ENCODE measurements at regions of chr6 and their contacts with region 1.

Region 1: GRCh38 chr6:52389626-52390360 is 27.8 kb downstream of the PAQR8 start:
- DNase-seq: peak; percentile 66 to 85 (median 69)
- H3K4me3 ChIP-seq: peak overlapping the region; percentile 14 to 34
- H3K4me3 Mint-ChIP-seq: peak overlapping the region; percentile 77 to 92 (median 82)
- H3K27ac ChIP-seq: peak overlapping the region; percentile 80
- H3K27ac Mint-ChIP-seq: peak overlapping the region; percentile 95 to 99 (median 97)
- H3K4me1 ChIP-seq: peaks cover 90% of the 10 kb centered on the region
- H3K4me1 Mint-ChIP-seq: peaks cover 67 to 94% (median 81%) of the 10 kb centered on the region in 4 donors
- H3K27me3 ChIP-seq: no peaks in the 10 kb centered on the region
- H3K27me3 Mint-ChIP-seq: no peaks in the 10 kb centered on the region

Region 2: DNA sequence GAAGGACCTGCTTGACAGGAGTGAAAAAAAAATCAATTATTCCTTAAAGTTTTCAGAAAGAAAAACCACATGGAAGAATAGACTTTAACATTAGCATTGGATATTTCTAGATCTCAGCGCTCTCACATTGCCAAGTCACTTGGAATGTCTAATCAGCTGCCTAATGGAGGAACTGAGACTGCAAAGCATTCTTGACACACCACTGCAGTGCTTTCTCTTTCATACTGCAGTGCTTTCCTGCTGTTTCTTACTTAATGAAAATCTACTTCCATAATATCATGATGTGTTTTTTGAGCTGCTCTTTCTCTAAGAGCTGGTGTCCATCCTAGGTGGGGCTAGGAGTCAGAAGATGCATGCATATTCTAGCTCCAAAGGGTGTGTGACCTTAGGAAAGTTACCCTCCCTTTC is 84.8 kb before region 1 on chr6:
- CTCF ChIA-PET with region 1: interaction called, 15 read pairs
- POLR2A ChIA-PET with region 1: interaction called, 48 read pairs
- intact Hi-C with region 1: no loop called
- DNase-seq: peak in 1 of 5 donors; percentile 22
- H3K4me3 ChIP-seq: peak overlapping the region in 1 of 2 donors; percentile 34
- H3K4me3 Mint-ChIP-seq: peak overlapping the region; percentile 73 to 92 (median 82)
- H3K27ac ChIP-seq: peak overlapping the region; percentile 59
- H3K27ac Mint-ChIP-seq: peak overlapping the region; percentile 88 to 96 (median 94)
- H3K4me1 ChIP-seq: peaks cover 73% of the 10 kb centered on the region
- H3K4me1 Mint-ChIP-seq: peaks cover 54 to 89% (median 71%) of the 10 kb centered on the region in 4 donors
- H3K27me3 ChIP-seq: no peaks in the 10 kb centered on the region
- H3K27me3 Mint-ChIP-seq: no peaks in the 10 kb centered on the region

Region 3: DNA sequence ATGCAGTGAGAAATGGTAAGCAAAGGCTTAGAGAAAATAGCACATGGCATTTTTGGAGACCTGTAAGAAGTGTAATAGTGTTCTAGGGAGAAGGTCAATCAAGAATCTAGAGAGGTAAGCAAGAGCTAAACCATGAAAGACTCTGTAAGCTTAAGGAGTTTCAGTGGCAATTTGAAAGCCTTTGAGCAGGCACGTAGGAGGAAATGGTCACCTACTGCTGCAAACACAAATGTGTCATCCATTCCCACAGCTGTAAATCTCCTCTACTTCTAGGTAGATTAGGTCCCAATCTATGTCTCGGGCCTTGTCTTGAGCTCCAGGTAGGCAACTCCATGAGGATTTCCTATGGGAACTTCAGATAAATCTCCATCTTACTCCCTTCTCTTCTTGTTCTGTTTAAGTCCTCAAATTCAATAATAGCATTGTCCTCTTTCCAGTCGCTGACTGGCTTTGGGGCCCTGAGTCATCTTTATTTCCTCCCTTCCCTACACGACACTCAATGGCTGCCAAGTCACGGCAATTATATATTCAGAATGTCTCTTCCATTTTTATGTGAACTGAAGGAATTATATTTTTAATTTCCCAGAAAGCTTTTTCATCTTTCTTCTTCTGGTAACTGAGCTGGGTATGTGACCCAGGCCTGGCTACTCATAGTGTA is 52.0 kb before region 1 on chr6:
- CTCF ChIA-PET with region 1: interaction called, 4 read pairs
- POLR2A ChIA-PET with region 1: interaction called, 20 read pairs
- intact Hi-C with region 1: no loop called
- DNase-seq: no peak
- H3K4me3 ChIP-seq: no peak overlapping the region
- H3K4me3 Mint-ChIP-seq: peak overlapping the region in 1 of 8 donors; percentile 48
- H3K27ac ChIP-seq: no peak overlapping the region
- H3K27ac Mint-ChIP-seq: peak overlapping the region in 5 of 7 donors; percentile 38 to 86 (median 66)
- H3K4me1 ChIP-seq: peaks cover 60% of the 10 kb centered on the region
- H3K4me1 Mint-ChIP-seq: peaks cover 43 to 67% (median 53%) of the 10 kb centered on the region in 4 donors
- H3K27me3 ChIP-seq: no peaks in the 10 kb centered on the region
- H3K27me3 Mint-ChIP-seq: no peaks in the 10 kb centered on the region

Region 4: DNA sequence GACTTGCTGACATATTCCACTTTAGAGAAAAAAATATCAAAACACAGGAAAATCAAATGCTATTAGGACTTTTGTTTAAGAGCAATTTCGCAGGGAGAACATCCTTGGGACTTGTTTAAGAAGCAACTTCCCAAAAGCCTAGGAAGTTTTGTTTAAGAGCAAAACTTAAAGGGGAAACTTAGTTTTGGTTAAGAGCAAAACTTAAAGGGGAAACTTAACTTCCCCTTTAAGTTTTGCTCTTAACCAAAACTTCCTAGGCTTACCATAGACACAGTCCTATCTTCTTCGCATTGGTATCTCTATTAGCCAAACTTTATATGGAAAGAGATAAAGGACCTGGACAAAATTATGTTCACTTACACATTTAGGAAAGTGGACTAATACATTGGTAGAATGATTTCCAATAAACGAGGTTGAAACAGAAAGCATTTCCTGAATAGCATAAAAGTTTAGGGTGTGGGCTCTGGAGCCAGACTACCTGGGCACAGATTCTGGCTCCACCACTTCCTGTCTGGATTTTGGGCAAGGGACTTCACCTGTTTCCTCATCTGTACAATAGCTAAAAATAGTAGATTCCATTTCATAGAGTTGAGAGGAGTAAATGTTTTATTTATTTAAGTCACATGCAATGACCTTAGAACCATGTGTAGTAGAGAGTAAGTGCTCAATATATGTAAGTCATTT is 12.1 kb before region 1 on chr6:
- CTCF ChIA-PET with region 1: interaction called, 17 read pairs
- POLR2A ChIA-PET with region 1: interaction called, 51 read pairs
- intact Hi-C with region 1: loop called (anchors 1 kb)
- DNase-seq: peak in 2 of 5 donors; percentile 19 to 48
- H3K4me3 ChIP-seq: no peak overlapping the region
- H3K4me3 Mint-ChIP-seq: peak overlapping the region; percentile 8 to 83 (median 59)
- H3K27ac ChIP-seq: no peak overlapping the region
- H3K27ac Mint-ChIP-seq: peak overlapping the region; percentile 58 to 89 (median 86)
- H3K4me1 ChIP-seq: peaks cover 67% of the 10 kb centered on the region
- H3K4me1 Mint-ChIP-seq: peaks cover 56 to 86% (median 74%) of the 10 kb centered on the region in 4 donors
- H3K27me3 ChIP-seq: no peaks in the 10 kb centered on the region
- H3K27me3 Mint-ChIP-seq: no peaks in the 10 kb centered on the region

Region 5: GRCh38 chr6:52929321-52930164 is 539.8 kb after region 1 on chr6:
- CTCF ChIA-PET with region 1: no interaction called
- POLR2A ChIA-PET with region 1: no interaction called
- intact Hi-C with region 1: no loop called
- DNase-seq: no peak
- H3K4me3 ChIP-seq: no peak overlapping the region
- H3K4me3 Mint-ChIP-seq: no peak overlapping the region
- H3K27ac ChIP-seq: no peak overlapping the region
- H3K27ac Mint-ChIP-seq: no peak overlapping the region
- H3K4me1 ChIP-seq: no peaks in the 10 kb centered on the region
- H3K4me1 Mint-ChIP-seq: no peaks in the 10 kb centered on the region
- H3K27me3 ChIP-seq: no peaks in the 10 kb centered on the region
- H3K27me3 Mint-ChIP-seq: peaks cover 0 to 13% of the 10 kb centered on the region in 2 donors